ENCODE measurements at regions of chr15 and their contacts with region 1.

Region 1: GRCh38 chr15:90915216-90915807 is 12.2 kb downstream of the MAN2A2 start:
- DNase-seq: no peak
- ATAC-seq: no peak
- H3K4me3 Mint-ChIP-seq: no peak overlapping the region
- H3K27ac Mint-ChIP-seq: no peak overlapping the region
- H3K4me1 Mint-ChIP-seq: no peaks in the 10 kb centered on the region
- H3K27me3 Mint-ChIP-seq: no peaks in the 10 kb centered on the region

Region 2: DNA sequence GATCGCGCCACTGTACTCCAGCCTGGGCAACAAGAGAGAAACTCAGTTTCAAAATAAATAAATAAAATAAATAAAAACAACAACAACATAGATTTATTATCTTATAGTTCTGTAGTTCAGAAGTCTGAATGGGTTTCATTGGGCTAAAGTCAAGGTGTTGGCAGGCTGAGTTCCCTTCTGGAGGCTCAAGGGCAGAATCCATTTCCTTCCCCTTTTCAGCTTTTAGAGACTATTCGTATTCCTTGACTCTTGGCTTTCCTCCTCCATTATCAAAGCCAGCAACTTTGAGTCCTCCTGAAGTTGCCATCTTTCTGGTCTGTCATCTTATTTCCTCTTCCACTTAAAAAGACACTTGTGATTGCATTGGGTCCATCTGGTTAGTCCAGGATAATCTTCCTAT is 186.1 kb before region 1 on chr15:
- CTCF ChIA-PET with region 1: no interaction called
- POLR2A ChIA-PET with region 1: interaction called, 11 read pairs
- intact Hi-C with region 1: no loop called
- DNase-seq: no peak
- ATAC-seq: no peak
- H3K4me3 Mint-ChIP-seq: no peak overlapping the region
- H3K27ac Mint-ChIP-seq: no peak overlapping the region
- H3K4me1 Mint-ChIP-seq: peaks cover 2% of the 10 kb centered on the region
- H3K27me3 Mint-ChIP-seq: no peaks in the 10 kb centered on the region

Region 3: DNA sequence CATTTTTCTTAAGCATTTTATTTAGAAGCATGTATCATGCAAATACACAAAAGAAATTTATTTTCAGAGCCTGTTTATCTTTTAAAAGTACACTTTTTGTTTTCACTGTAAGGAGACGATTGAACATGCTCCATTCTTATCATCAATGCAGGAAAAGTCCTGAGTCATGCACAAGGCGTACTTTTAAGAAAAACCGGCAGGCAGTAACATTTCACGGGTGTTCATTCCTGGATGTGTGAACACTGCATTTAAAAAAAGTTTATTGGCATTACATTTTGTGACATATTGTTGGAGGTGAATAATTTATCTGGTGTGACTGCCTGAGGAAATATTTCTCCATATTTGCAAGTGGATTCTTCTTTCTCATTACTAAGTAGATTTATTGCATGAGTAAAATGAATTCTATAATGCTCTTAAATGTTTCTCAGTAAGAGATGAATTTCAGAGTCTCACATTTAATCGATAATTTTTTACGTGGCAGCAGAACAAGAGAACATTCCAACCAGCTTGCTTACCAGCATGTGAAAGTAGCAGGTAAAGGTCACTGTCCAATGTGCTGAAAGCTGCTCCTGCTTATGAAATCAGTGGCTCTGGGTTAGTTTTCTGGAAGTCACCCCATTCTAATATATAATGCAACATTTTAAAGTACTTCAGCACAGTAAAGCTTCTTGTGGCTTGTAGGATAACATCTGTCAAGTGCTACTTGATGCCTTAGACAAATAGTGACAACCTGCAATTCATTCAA is 271.8 kb after region 1 on chr15:
- CTCF ChIA-PET with region 1: no interaction called
- POLR2A ChIA-PET with region 1: no interaction called
- intact Hi-C with region 1: no loop called
- DNase-seq: peak; percentile 13
- ATAC-seq: no peak
- H3K4me3 Mint-ChIP-seq: no peak overlapping the region
- H3K27ac Mint-ChIP-seq: no peak overlapping the region
- H3K4me1 Mint-ChIP-seq: no peaks in the 10 kb centered on the region
- H3K27me3 Mint-ChIP-seq: peaks cover 35% of the 10 kb centered on the region

Measured in activated CD4-positive, alpha-beta T cell treated with anti-CD3 and anti-CD28 coated beads for 36 hours (primary cell).